CD8-positive, alpha-beta memory T cell (primary cell): ENCODE measurements at regions of chr22 and their contacts with region 1.

Region 1: GRCh38 chr22:42375982-42376381 is 56.2 kb downstream of the NFAM1 start:
- DNase-seq: no peak
- H3K4me3 ChIP-seq: no peak overlapping the region
- H3K4me3 Mint-ChIP-seq: no peak overlapping the region
- H3K27ac ChIP-seq: no peak overlapping the region
- H3K27ac Mint-ChIP-seq: no peak overlapping the region
- H3K4me1 ChIP-seq: no peaks in the 10 kb centered on the region
- H3K4me1 Mint-ChIP-seq: peaks cover 0 to 2% (median 0%) of the 10 kb centered on the region in 3 donors
- H3K27me3 ChIP-seq: no peaks in the 10 kb centered on the region
- H3K27me3 Mint-ChIP-seq: peaks cover 2 to 5% of the 10 kb centered on the region in 2 donors

Region 2: DNA sequence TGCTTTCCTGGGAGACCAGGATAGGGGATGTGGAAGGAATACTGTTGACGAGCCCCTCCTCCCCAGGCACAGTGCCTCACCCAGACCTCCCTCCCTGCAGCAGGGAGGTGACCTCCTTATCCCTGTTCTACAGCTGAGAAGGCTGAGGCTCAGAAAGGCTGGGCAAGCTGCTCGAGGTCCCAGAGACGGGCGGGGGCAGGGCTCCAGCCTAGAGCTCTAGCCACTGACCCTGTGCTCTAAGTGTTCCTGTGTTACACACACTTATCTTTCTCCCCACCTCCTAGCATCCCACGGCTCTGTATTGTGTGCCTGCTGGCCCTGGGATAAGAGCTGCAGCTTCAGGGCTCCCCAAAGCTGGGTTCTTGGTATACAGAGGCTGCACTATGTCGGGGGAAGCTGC is 567.6 kb before region 1 on chr22:
- CTCF ChIA-PET with region 1: no interaction called
- POLR2A ChIA-PET with region 1: interaction called, 11 read pairs
- DNase-seq: no peak
- H3K4me3 ChIP-seq: no peak overlapping the region
- H3K4me3 Mint-ChIP-seq: no peak overlapping the region
- H3K27ac ChIP-seq: no peak overlapping the region
- H3K27ac Mint-ChIP-seq: peak overlapping the region in 1 of 8 donors; percentile 87
- H3K4me1 ChIP-seq: peaks cover 4% of the 10 kb centered on the region
- H3K4me1 Mint-ChIP-seq: peaks cover 2 to 28% (median 10%) of the 10 kb centered on the region in 3 donors
- H3K27me3 ChIP-seq: no peaks in the 10 kb centered on the region
- H3K27me3 Mint-ChIP-seq: no peaks in the 10 kb centered on the region

Region 3: GRCh38 chr22:42357634-42358296 is 18.2 kb before region 1 on chr22:
- CTCF ChIA-PET with region 1: no interaction called
- POLR2A ChIA-PET with region 1: no interaction called
- DNase-seq: no peak
- H3K4me3 ChIP-seq: no peak overlapping the region
- H3K4me3 Mint-ChIP-seq: no peak overlapping the region
- H3K27ac ChIP-seq: no peak overlapping the region
- H3K27ac Mint-ChIP-seq: no peak overlapping the region
- H3K4me1 ChIP-seq: no peaks in the 10 kb centered on the region
- H3K4me1 Mint-ChIP-seq: no peaks in the 10 kb centered on the region
- H3K27me3 ChIP-seq: no peaks in the 10 kb centered on the region
- H3K27me3 Mint-ChIP-seq: peaks cover 14 to 22% of the 10 kb centered on the region in 2 donors